Endothelial cell of umbilical vein (primary cell): ENCODE measurements at regions of chr3 and their contacts with region 1.

Region 1: GRCh38 chr3:188954590-188955208 is 217.1 kb upstream of the TPRG1 start:
- DNase-seq: peak; percentile 84
- H3K4me3 ChIP-seq: no peak overlapping the region
- H3K27ac ChIP-seq: no peak overlapping the region
- H3K4me1 ChIP-seq: peaks cover 21% of the 10 kb centered on the region
- H3K27me3 ChIP-seq: no peaks in the 10 kb centered on the region
- CTCF ChIP-seq: peak; percentile 84 to 95
- POLR2A ChIP-seq: no peak

Region 2: GRCh38 chr3:188154014-188154808 is 800.5 kb before region 1 on chr3 and contains the start of gene LPP:
- CTCF ChIA-PET with region 1: interaction called, 9 read pairs
- POLR2A ChIA-PET with region 1: no interaction called
- dilution Hi-C with region 1: no loop called
- intact Hi-C with region 1: loop called (anchors 2 kb)
- DNase-seq: peak; percentile 45
- H3K4me3 ChIP-seq: peak within 1 kb of the TSS; percentile 91 to 94 (median 92)
- H3K27ac ChIP-seq: peak within 1 kb of the TSS; percentile 91
- H3K4me1 ChIP-seq: peaks cover 20% of the 10 kb centered on the region
- H3K27me3 ChIP-seq: no peaks in the 10 kb centered on the region
- CTCF ChIP-seq: no peak
- POLR2A ChIP-seq: peak; percentile 15
- total RNA-seq, gene LPP: 136 and 153 TPM in 2 replicates

Region 3: GRCh38 chr3:188439080-188439479 is 515.6 kb before region 1 on chr3:
- CTCF ChIA-PET with region 1: no interaction called
- POLR2A ChIA-PET with region 1: no interaction called
- dilution Hi-C with region 1: no loop called
- intact Hi-C with region 1: loop called (anchors 5 kb)
- DNase-seq: peak; percentile 85
- H3K4me3 ChIP-seq: no peak overlapping the region
- H3K27ac ChIP-seq: peak overlapping the region; percentile 86
- H3K4me1 ChIP-seq: peaks cover 36% of the 10 kb centered on the region
- H3K27me3 ChIP-seq: no peaks in the 10 kb centered on the region
- CTCF ChIP-seq: no peak
- POLR2A ChIP-seq: no peak

Region 4: GRCh38 chr3:188673646-188674186 is 281.0 kb before region 1 on chr3:
- CTCF ChIA-PET with region 1: interaction called, 11 read pairs
- POLR2A ChIA-PET with region 1: no interaction called
- dilution Hi-C with region 1: no loop called
- intact Hi-C with region 1: loop called (anchors 5 kb)
- DNase-seq: no peak
- H3K4me3 ChIP-seq: no peak overlapping the region
- H3K27ac ChIP-seq: no peak overlapping the region
- H3K4me1 ChIP-seq: no peaks in the 10 kb centered on the region
- H3K27me3 ChIP-seq: no peaks in the 10 kb centered on the region
- CTCF ChIP-seq: no peak
- POLR2A ChIP-seq: no peak

Region 5: GRCh38 chr3:188830893-188831292 is 123.8 kb before region 1 on chr3:
- CTCF ChIA-PET with region 1: interaction called, 26 read pairs
- POLR2A ChIA-PET with region 1: no interaction called
- dilution Hi-C with region 1: no loop called
- intact Hi-C with region 1: loop called (anchors 1 kb)
- DNase-seq: no peak
- H3K4me3 ChIP-seq: no peak overlapping the region
- H3K27ac ChIP-seq: no peak overlapping the region
- H3K4me1 ChIP-seq: no peaks in the 10 kb centered on the region
- H3K27me3 ChIP-seq: no peaks in the 10 kb centered on the region
- CTCF ChIP-seq: peak; percentile 30 to 41
- POLR2A ChIP-seq: no peak

Region 6: DNA sequence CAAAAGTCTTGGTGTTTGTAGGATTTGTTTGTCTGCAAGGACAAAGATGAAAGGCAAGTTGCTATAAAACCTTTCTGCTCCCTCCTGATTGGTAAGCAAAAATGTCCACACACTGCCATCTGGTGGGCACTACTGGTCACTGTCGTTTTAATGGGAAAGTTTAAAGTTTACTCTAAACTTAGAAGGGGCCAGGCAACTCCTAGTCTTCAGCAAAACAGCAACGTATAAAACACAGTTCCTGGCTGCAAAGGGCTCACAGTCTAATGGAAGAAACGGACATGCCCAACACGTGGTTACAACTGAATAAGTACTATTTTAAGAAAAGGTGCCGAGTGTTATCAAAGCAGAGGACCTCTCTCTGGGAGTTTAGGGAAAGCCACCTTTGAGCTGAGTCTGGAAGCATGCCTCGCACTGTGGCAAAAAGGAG is 193.4 kb after region 1 on chr3:
- CTCF ChIA-PET with region 1: interaction called, 7 read pairs
- POLR2A ChIA-PET with region 1: no interaction called
- dilution Hi-C with region 1: no loop called
- intact Hi-C with region 1: loop called (anchors 1 kb)
- DNase-seq: peak; percentile 71
- H3K4me3 ChIP-seq: no peak overlapping the region
- H3K27ac ChIP-seq: no peak overlapping the region
- H3K4me1 ChIP-seq: no peaks in the 10 kb centered on the region
- H3K27me3 ChIP-seq: peaks cover 5 to 8% of the 10 kb centered on the region in 2 experiments
- CTCF ChIP-seq: peak; percentile 61 to 70
- POLR2A ChIP-seq: no peak